Activated B cell treated with CpG ODN at 0.5 μM for 24 hours (primary cell): ENCODE measurements at regions of chr1 and their contacts with region 1.

Region 1: GRCh38 chr1:172895050-172895460 is 155.7 kb downstream of the TNFSF18 start:
- DNase-seq: no peak
- ATAC-seq: peak; percentile 68
- H3K4me3 Mint-ChIP-seq: peak overlapping the region; percentile 70
- H3K27ac Mint-ChIP-seq: peak overlapping the region; percentile 86
- H3K4me1 Mint-ChIP-seq: peaks cover 40% of the 10 kb centered on the region
- H3K27me3 Mint-ChIP-seq: no peaks in the 10 kb centered on the region
- CTCF ChIP-seq: no peak

Region 2: GRCh38 chr1:172883107-172883791 is 11.8 kb before region 1 on chr1:
- CTCF ChIA-PET with region 1: no interaction called
- POLR2A ChIA-PET with region 1: no interaction called
- intact Hi-C with region 1: no loop called
- DNase-seq: no peak
- ATAC-seq: peak; percentile 50
- H3K4me3 Mint-ChIP-seq: peak overlapping the region; percentile 16
- H3K27ac Mint-ChIP-seq: no peak overlapping the region
- H3K4me1 Mint-ChIP-seq: peaks cover 16% of the 10 kb centered on the region
- H3K27me3 Mint-ChIP-seq: peaks cover 7% of the 10 kb centered on the region
- CTCF ChIP-seq: no peak

Region 3: GRCh38 chr1:172906778-172907592 is 11.9 kb after region 1 on chr1:
- CTCF ChIA-PET with region 1: interaction called, 3 read pairs
- POLR2A ChIA-PET with region 1: interaction called, 11 read pairs
- intact Hi-C with region 1: no loop called
- DNase-seq: no peak
- ATAC-seq: no peak
- H3K4me3 Mint-ChIP-seq: peak overlapping the region; percentile 7
- H3K27ac Mint-ChIP-seq: peak overlapping the region; percentile 15
- H3K4me1 Mint-ChIP-seq: peaks cover 24% of the 10 kb centered on the region
- H3K27me3 Mint-ChIP-seq: no peaks in the 10 kb centered on the region
- CTCF ChIP-seq: no peak

Region 4: GRCh38 chr1:173195596-173196088 is 300.6 kb after region 1 on chr1:
- CTCF ChIA-PET with region 1: no interaction called
- POLR2A ChIA-PET with region 1: interaction called, 11 read pairs
- intact Hi-C with region 1: no loop called
- DNase-seq: peak; percentile 31
- ATAC-seq: peak; percentile 93
- H3K4me3 Mint-ChIP-seq: peak overlapping the region; percentile 61
- H3K27ac Mint-ChIP-seq: peak overlapping the region; percentile 88
- H3K4me1 Mint-ChIP-seq: peaks cover 36% of the 10 kb centered on the region
- H3K27me3 Mint-ChIP-seq: no peaks in the 10 kb centered on the region
- CTCF ChIP-seq: no peak

Region 5: GRCh38 chr1:173768206-173768605 is 873.2 kb after region 1 on chr1:
- CTCF ChIA-PET with region 1: no interaction called
- POLR2A ChIA-PET with region 1: no interaction called
- intact Hi-C with region 1: no loop called
- DNase-seq: no peak
- ATAC-seq: no peak
- H3K4me3 Mint-ChIP-seq: no peak overlapping the region
- H3K27ac Mint-ChIP-seq: no peak overlapping the region
- H3K4me1 Mint-ChIP-seq: no peaks in the 10 kb centered on the region
- H3K27me3 Mint-ChIP-seq: no peaks in the 10 kb centered on the region
- CTCF ChIP-seq: no peak